ENCODE measurements at regions of chr2 and their contacts with region 1.

Region 1: DNA sequence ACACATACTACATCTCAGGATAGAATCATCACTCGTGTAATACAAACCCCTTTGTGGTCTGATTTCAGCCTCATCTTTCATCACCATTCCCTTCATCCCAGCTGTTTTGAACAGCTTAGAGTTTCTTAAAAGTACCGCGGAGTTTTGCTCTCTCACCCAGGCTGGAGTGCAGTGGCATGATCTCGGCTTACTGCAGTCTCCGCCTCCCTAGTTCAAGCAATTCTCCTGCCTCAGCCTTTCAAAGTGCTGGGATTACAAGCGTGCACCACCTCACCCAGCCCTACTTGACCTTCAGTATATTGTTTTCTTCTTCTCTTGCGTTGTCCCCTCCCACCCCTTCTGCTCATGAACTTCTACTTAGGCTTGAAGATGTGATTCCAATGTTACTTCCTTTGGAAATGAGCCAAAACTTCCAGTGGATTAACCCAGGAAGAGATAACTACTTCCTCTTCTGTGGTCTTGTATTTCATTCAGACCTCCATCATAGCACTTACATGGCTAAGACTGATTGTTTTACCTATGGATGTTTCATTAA is 15.8 kb downstream of the ERLEC1 start:
- DNase-seq: no peak
- ATAC-seq: no peak
- H3K4me3 ChIP-seq: no peak overlapping the region
- H3K27ac ChIP-seq: no peak overlapping the region
- H3K4me1 ChIP-seq: no peaks in the 10 kb centered on the region
- H3K27me3 ChIP-seq: no peaks in the 10 kb centered on the region
- CTCF ChIP-seq: no peak
- EP300 ChIP-seq: no peak
- POLR2A ChIP-seq: no peak
- RAD21 ChIP-seq: no peak

Region 2: GRCh38 chr2:53786705-53787612 is 15.7 kb before region 1 on chr2 and contains the starts of genes ASB3 and ERLEC1:
- CTCF ChIA-PET with region 1: no interaction called
- POLR2A ChIA-PET with region 1: interaction called, 16 read pairs
- in situ Hi-C with region 1: no loop called
- intact Hi-C with region 1: no loop called
- DNase-seq: peak; percentile 76 to 93 (median 83)
- ATAC-seq: peak; percentile 92
- H3K4me3 ChIP-seq: peak within 1 kb of the TSS; percentile 94
- H3K27ac ChIP-seq: peak within 1 kb of the TSS; percentile 87
- H3K4me1 ChIP-seq: peaks cover 4 to 11% of the 10 kb centered on the region in 2 experiments; a peak in 4 of 5 replicates
- H3K27me3 ChIP-seq: no peaks in the 10 kb centered on the region; a peak in 1 of 5 replicates
- CTCF ChIP-seq: peak in 1 of 3 experiments; percentile 5; a peak in 1 of 6 replicates
- EP300 ChIP-seq: no peak; the same call in 1 of the 2 replicates
- POLR2A ChIP-seq: peak; percentile 90
- RAD21 ChIP-seq: peak in 1 of 2 experiments; percentile 4; a peak in 1 of 4 replicates
- polyA plus RNA-seq, gene ASB3: 20.1 to 22.4 TPM
- polyA plus RNA-seq, gene ERLEC1: 12.0 to 13.8 TPM

Measured in K562 (cell line).